ENCODE measurements at regions of chr6 and their contacts with region 1.

Region 1: GRCh38 chr6:43477235-43478007 is at the start of gene TJAP1:
- DNase-seq: peak; percentile 94
- H3K4me3 Mint-ChIP-seq: peak within 1 kb of the TSS; percentile 97
- H3K27ac Mint-ChIP-seq: peak within 1 kb of the TSS; percentile 97
- H3K4me1 Mint-ChIP-seq: peaks cover 33% of the 10 kb centered on the region
- H3K27me3 Mint-ChIP-seq: no peaks in the 10 kb centered on the region
- total RNA-seq, gene TJAP1: 43.4 and 48.2 TPM in 2 replicates

Region 2: DNA sequence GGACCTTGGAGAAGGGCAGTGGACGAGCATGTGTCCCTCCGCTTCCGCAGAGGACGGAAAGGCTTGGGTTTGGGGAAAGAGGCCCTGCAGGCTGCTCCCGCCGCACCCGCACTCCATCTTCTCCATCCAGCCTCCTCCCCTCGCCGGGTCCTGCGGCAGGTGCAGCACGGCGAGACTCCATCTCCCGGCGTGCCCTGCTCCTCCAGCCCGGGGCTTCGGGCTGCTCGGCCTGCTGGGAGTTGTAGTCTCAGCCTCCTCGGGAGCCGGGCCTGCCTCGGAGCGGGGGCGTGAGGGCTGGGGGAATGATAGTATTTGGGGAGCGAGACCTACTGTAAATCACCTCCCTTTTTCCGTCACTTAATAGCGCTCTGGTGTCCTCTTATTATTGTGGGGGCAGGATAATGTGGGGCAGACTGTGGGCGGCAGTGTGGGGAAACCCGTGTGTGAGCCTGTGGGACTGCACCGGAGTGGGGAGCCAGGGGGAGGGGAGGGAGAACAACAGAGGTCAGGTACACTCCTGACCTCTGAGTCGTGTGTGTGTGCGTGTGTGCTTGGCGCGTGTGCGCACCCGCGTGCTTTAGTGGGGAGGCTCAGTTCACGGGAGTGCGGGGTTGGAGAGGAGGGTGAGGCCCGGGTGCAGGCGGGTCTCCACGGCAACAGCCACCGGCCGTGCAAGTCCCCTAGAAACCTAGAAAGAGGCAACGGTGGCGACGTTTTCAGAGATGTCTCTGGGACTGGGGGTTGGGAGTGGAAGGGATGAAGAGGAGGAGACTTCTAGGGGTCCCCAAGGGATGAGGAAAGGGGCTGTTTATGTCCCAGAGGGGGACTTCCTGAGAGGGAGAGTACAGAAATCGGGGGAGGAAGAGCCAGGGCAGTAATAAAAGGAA is 230.1 kb before region 1 on chr6:
- intact Hi-C with region 1: loop called (anchors 1 kb)
- DNase-seq: peak; percentile 77
- H3K4me3 Mint-ChIP-seq: peak overlapping the region; percentile 77
- H3K27ac Mint-ChIP-seq: peak overlapping the region; percentile 85
- H3K4me1 Mint-ChIP-seq: peaks cover 21% of the 10 kb centered on the region
- H3K27me3 Mint-ChIP-seq: peaks cover 17% of the 10 kb centered on the region

Region 3: GRCh38 chr6:43386492-43386891 is 90.9 kb before region 1 on chr6:
- intact Hi-C with region 1: loop called (anchors 1 kb)
- DNase-seq: no peak
- H3K4me3 Mint-ChIP-seq: no peak overlapping the region
- H3K27ac Mint-ChIP-seq: no peak overlapping the region
- H3K4me1 Mint-ChIP-seq: peaks cover 56% of the 10 kb centered on the region
- H3K27me3 Mint-ChIP-seq: peaks cover 43% of the 10 kb centered on the region

Region 4: GRCh38 chr6:43454696-43455530 is 22.5 kb before region 1 on chr6:
- intact Hi-C with region 1: loop called (anchors 1 kb)
- DNase-seq: peak; percentile 60
- H3K4me3 Mint-ChIP-seq: peak overlapping the region; percentile 74
- H3K27ac Mint-ChIP-seq: peak overlapping the region; percentile 34
- H3K4me1 Mint-ChIP-seq: peaks cover 11% of the 10 kb centered on the region
- H3K27me3 Mint-ChIP-seq: peaks cover 30% of the 10 kb centered on the region

Region 5: DNA sequence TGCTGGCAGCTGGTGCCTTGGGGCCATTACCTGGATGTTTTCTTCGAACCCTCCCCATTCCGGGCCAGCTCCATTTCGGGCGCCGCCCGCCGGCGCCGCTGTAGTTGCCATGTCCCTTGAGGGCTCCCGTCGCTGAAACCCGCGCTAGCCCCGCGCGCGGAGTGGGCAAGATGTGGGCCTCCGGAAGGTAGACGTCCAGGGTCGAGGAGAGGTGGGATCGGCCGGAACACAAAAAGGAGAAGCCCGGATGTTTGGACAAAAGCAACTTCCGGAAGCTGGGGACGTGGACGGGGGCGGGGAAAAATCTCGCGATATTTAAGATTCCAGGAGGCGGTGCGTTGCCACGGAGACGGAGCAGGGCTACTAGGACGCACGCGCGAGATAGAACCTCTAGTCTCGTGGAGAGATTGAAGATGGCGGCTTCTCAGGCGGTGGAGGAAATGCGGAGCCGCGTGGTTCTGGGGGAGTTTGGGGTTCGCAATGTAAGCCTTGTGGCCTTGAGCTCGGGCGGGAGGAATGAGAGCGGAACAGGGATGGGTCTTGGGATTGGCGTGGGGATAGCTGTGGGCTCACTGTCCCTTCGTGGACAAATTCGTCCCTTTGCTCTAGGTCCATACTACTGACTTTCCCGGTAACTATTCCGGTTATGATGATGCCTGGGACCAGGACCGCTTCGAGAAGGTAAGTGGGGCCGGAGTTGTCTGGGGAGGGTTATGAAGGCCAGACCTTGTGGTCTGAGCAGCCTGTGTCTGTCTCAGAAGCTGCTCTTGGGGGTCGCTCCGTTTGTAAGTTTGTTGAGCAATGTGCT is 39.5 kb after region 1 on chr6 and contains the starts of genes POLR1C and YIPF3:
- intact Hi-C with region 1: loop called (anchors 2 kb)
- DNase-seq: peak; percentile 95
- H3K4me3 Mint-ChIP-seq: no peak within 1 kb of the TSS
- H3K27ac Mint-ChIP-seq: no peak within 1 kb of the TSS
- H3K4me1 Mint-ChIP-seq: peaks cover 20% of the 10 kb centered on the region
- H3K27me3 Mint-ChIP-seq: no peaks in the 10 kb centered on the region
- total RNA-seq, gene POLR1C: 85.8 and 98.0 TPM in 2 replicates
- total RNA-seq, gene YIPF3: 60.2 and 62.5 TPM in 2 replicates